Activated CD4-positive, alpha-beta memory T cell treated with anti-CD3 and anti-CD28 coated beads for 36 hours (primary cell): ENCODE measurements at regions of chr9 and their contacts with region 1.

Region 1: GRCh38 chr9:87973730-87974292 is 522 bp downstream of the CDK20 start:
- DNase-seq: no peak
- H3K4me3 Mint-ChIP-seq: peak overlapping the region; percentile 91
- H3K27ac Mint-ChIP-seq: peak overlapping the region; percentile 18
- H3K4me1 Mint-ChIP-seq: peaks cover 14% of the 10 kb centered on the region
- H3K27me3 Mint-ChIP-seq: peaks cover 3% of the 10 kb centered on the region

Region 2: GRCh38 chr9:88041447-88041846 is 67.6 kb after region 1 on chr9:
- CTCF ChIA-PET with region 1: no interaction called
- POLR2A ChIA-PET with region 1: no interaction called
- intact Hi-C with region 1: loop called (anchors 10 kb)
- DNase-seq: no peak
- H3K4me3 Mint-ChIP-seq: no peak overlapping the region
- H3K27ac Mint-ChIP-seq: no peak overlapping the region
- H3K4me1 Mint-ChIP-seq: no peaks in the 10 kb centered on the region
- H3K27me3 Mint-ChIP-seq: peaks cover 17% of the 10 kb centered on the region

Region 3: GRCh38 chr9:88258027-88258426 is 284.2 kb after region 1 on chr9:
- CTCF ChIA-PET with region 1: no interaction called
- POLR2A ChIA-PET with region 1: no interaction called
- intact Hi-C with region 1: no loop called
- DNase-seq: no peak
- H3K4me3 Mint-ChIP-seq: no peak overlapping the region
- H3K27ac Mint-ChIP-seq: no peak overlapping the region
- H3K4me1 Mint-ChIP-seq: no peaks in the 10 kb centered on the region
- H3K27me3 Mint-ChIP-seq: no peaks in the 10 kb centered on the region

Region 4: DNA sequence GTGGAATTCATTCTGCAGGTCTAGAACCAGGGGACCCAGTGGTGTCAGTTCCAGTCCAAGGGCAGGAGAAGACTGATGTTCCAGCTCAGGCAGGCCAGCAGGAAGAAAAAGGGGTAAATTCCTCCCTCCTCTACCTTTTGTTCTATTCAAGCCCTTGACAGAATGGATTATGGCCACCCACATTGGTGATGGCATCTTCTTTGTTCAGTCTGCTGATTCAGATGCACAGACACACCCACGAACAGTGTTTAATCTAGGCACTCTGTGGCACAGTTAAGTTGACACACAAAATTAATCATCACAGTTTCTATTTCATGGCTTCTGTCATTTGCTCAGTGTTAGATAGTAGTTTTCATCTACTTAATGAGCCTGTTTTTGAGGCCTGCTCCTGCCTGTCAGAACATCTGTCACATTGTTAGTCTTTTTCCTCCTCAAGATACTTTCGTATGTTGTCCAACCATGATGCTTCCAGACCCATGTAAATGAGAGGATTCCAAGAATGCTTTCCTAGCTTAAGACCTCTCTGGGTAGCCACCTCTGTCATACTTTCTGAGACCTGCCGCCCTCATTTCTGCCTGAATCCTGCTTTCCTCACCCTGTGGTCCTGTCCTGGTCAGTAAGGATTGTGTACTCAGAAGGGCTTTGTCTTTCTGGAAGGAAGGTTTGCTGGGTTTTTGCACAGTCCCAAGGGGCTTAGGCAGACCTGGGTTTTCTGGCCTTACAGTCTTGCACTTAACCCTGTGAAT is 486.9 kb after region 1 on chr9:
- CTCF ChIA-PET with region 1: no interaction called
- POLR2A ChIA-PET with region 1: no interaction called
- intact Hi-C with region 1: loop called (anchors 5 kb)
- DNase-seq: peak; percentile 49
- H3K4me3 Mint-ChIP-seq: no peak overlapping the region
- H3K27ac Mint-ChIP-seq: peak overlapping the region; percentile 23
- H3K4me1 Mint-ChIP-seq: peaks cover 15% of the 10 kb centered on the region
- H3K27me3 Mint-ChIP-seq: no peaks in the 10 kb centered on the region